Naive thymus-derived CD4-positive, alpha-beta T cell (primary cell): ENCODE measurements at regions of chr2 and their contacts with region 1.

Region 1: DNA sequence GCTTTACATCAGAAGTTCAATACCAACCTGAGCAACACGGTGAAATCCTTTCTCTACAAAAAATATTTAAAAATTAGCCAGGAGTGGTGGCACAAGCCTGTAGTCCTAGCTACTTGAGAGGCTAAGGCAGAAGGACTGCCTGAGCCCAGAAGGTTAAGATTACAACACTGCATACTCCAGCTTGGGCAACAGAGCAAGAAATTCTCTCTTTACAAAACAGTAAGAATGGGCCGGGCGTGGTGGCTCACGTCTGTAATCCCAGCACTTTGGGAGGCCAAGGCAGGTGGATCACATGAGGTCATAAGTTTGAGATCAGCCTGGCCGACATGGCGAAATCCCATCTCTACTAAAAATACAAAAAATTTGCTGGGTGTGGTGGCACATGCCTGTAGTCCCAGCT is 113.2 kb downstream of the USP34 start:
- DNase-seq: no peak
- ATAC-seq: no peak
- H3K4me3 ChIP-seq: no peak overlapping the region
- H3K4me3 Mint-ChIP-seq: no peak overlapping the region
- H3K27ac ChIP-seq: no peak overlapping the region
- H3K27ac Mint-ChIP-seq: peak overlapping the region in 4 of 9 donors; percentile 28 to 72 (median 56)
- H3K4me1 ChIP-seq: peaks cover 0 to 3% of the 10 kb centered on the region in 2 donors
- H3K4me1 Mint-ChIP-seq: peaks cover 27 to 73% (median 68%) of the 10 kb centered on the region in 7 donors
- H3K27me3 ChIP-seq: no peaks in the 10 kb centered on the region
- H3K27me3 Mint-ChIP-seq: no peaks in the 10 kb centered on the region

Region 2: DNA sequence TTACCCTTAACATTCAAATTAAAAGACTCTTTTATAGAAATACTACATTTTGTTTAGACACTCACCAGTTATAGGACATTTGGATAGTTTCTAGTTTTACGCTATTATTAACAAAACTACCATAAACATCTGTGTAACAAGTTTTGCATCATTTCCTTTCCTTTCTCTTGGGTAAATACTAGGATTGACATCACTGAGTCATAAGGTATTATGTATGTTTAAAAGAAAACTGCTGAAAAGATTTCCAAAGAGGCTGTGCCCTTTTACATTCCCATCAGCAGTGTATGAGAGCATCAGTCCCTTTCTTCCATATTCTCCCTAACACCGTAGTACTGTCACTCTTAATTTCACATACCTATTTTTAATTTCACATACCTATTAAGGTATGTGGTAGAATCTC is 17.4 kb before region 1 on chr2:
- CTCF ChIA-PET with region 1: no interaction called
- POLR2A ChIA-PET with region 1: no interaction called
- intact Hi-C with region 1: loop called in 1 of 2 experiments (anchors 2 kb)
- DNase-seq: no peak
- ATAC-seq: no peak
- H3K4me3 ChIP-seq: no peak overlapping the region
- H3K4me3 Mint-ChIP-seq: no peak overlapping the region
- H3K27ac ChIP-seq: no peak overlapping the region
- H3K27ac Mint-ChIP-seq: no peak overlapping the region
- H3K4me1 ChIP-seq: no peaks in the 10 kb centered on the region
- H3K4me1 Mint-ChIP-seq: peaks cover 0 to 6% (median 0%) of the 10 kb centered on the region in 7 donors
- H3K27me3 ChIP-seq: no peaks in the 10 kb centered on the region
- H3K27me3 Mint-ChIP-seq: no peaks in the 10 kb centered on the region

Region 3: DNA sequence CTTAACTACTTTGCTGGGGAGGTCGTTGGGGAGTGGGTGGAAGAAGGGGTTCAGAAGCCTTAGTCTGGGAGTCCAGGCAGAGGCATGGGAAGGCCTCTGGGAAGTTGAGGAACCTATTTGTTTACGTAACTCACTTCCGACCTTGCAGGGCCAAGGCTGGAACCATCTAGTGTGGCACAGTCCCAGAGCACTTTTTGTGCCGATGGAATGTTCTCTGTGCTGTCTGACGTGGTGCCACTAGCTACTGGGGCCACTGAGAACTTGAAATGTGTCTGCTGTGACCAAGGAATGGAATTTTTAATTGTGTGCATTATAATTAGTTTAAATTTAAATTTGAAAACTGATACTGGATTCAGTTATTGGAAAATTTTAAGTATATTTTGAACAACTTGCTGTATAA is 356.5 kb after region 1 on chr2:
- CTCF ChIA-PET with region 1: no interaction called
- POLR2A ChIA-PET with region 1: no interaction called
- intact Hi-C with region 1: no loop called
- DNase-seq: no peak
- ATAC-seq: no peak
- H3K4me3 ChIP-seq: no peak overlapping the region
- H3K4me3 Mint-ChIP-seq: no peak overlapping the region
- H3K27ac ChIP-seq: no peak overlapping the region
- H3K27ac Mint-ChIP-seq: no peak overlapping the region
- H3K4me1 ChIP-seq: no peaks in the 10 kb centered on the region
- H3K4me1 Mint-ChIP-seq: no peaks in the 10 kb centered on the region
- H3K27me3 ChIP-seq: no peaks in the 10 kb centered on the region
- H3K27me3 Mint-ChIP-seq: no peaks in the 10 kb centered on the region